Esophagus squamous epithelium (tissue), 5 donors: ENCODE measurements at regions of chr2 and their contacts with region 1.

Region 1: DNA sequence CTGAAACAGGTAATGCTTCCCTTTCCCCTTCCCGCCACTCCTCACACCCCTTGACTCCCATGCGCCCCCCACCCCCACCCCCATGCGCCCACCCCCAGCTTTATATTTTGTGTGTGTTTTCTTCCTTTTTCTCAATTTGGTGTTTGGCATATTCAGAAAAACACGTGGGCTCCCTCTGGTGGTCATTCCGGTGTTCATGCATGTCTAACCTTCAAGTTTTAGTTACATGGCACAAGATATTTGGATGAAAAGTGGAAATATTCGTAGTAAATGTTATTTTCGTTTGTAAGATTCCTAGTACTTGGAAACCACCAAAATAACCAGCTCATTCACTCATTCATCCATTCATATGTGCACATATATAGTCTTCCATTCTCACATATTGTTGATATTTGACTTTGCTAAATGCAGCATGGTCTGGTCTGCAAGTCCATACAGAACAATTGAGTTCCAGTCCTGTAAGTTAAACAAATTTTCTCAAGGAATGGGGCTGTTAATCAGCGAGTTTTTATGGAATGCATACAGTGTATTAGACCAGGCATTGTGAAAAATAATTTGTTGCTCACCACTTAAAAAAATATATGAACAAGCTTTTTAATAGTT is 143.6 kb upstream of the MAP3K20 start:
- DNase-seq: no peak
- H3K4me3 ChIP-seq: peak overlapping the region in 3 of 4 donors; percentile 4 to 49 (median 9)
- H3K27ac ChIP-seq: peak overlapping the region in 3 of 4 donors; percentile 57 to 81 (median 66)
- H3K4me1 ChIP-seq: peaks cover 0 to 52% (median 24%) of the 10 kb centered on the region in 3 donors
- H3K27me3 ChIP-seq: no peaks in the 10 kb centered on the region
- CTCF ChIP-seq: peak; percentile 55 to 83 (median 66)
- POLR2A ChIP-seq: no peak

Region 2: GRCh38 chr2:172613040-172613439 is 319.0 kb before region 1 on chr2:
- intact Hi-C with region 1: no loop called
- DNase-seq: no peak
- H3K4me3 ChIP-seq: no peak overlapping the region
- H3K27ac ChIP-seq: no peak overlapping the region
- H3K4me1 ChIP-seq: no peaks in the 10 kb centered on the region
- H3K27me3 ChIP-seq: no peaks in the 10 kb centered on the region
- CTCF ChIP-seq: no peak
- POLR2A ChIP-seq: no peak

Region 3: GRCh38 chr2:172806493-172806892 is 125.5 kb before region 1 on chr2:
- intact Hi-C with region 1: loop called (anchors 5 kb)
- DNase-seq: no peak
- H3K4me3 ChIP-seq: no peak overlapping the region
- H3K27ac ChIP-seq: no peak overlapping the region
- H3K4me1 ChIP-seq: peaks cover 0 to 11% (median 5%) of the 10 kb centered on the region in 3 donors
- H3K27me3 ChIP-seq: no peaks in the 10 kb centered on the region
- CTCF ChIP-seq: peak; percentile 60 to 90 (median 80)
- POLR2A ChIP-seq: no peak

Region 4: GRCh38 chr2:172864182-172864581 is 67.8 kb before region 1 on chr2:
- intact Hi-C with region 1: loop called (anchors 10 kb)
- DNase-seq: no peak
- H3K4me3 ChIP-seq: no peak overlapping the region
- H3K27ac ChIP-seq: no peak overlapping the region
- H3K4me1 ChIP-seq: peaks cover 0 to 33% (median 3%) of the 10 kb centered on the region in 3 donors
- H3K27me3 ChIP-seq: peaks cover 0 to 3% (median 0%) of the 10 kb centered on the region in 4 donors
- CTCF ChIP-seq: peak; percentile 55 to 69 (median 58)
- POLR2A ChIP-seq: no peak